CD4-positive, alpha-beta T cell (primary cell): ENCODE measurements at regions of chr9 and their contacts with region 1.

Region 1: DNA sequence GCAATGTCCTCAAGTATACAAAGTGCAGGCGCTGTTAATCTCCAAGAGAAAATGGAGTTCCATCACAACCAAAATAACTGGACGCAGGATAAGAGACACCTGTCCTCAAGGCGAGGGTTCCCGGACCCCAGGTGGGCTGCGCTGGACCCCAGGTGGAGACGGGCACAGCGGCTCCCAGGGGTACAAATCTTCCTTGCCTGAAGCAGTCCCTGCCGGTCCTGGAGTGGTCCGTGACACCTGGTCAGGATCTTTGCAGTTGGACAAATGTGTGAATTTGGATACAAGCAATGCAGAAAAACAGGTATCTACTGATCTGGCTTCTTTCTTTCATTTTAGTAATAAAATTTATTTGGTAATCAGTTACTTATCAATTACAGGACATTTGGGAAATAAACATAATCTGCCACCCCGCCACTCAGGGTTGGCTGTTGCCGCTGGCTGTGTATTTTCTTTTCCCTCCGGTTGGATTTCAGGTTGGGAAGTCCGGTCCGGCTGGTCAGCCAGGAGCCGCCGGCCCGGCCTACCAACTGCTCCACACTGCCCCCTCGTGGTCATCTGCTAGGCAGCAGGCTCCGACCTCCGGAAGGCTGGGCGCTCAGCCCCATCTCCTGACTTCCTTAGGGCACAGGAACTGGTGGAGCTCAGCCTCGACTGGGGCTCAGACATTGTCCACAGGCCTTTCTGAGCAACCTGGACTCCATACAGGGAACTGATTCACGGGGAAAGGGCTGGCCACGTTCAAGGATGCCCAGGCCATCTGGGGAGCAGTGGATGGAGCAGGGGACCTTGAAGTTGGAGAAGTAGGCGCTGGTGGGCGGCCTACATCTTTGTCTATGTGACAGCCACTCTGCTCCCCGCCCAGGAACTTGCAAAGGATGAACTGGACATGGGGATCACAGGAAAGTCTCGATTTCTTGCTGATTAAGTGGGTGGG is 43.4 kb downstream of the NXNL2 start:
- DNase-seq: peak; percentile 32 to 77 (median 54)
- ATAC-seq: no peak
- H3K4me3 ChIP-seq: no peak overlapping the region
- H3K4me3 Mint-ChIP-seq: no peak overlapping the region
- H3K27ac ChIP-seq: no peak overlapping the region
- H3K27ac Mint-ChIP-seq: no peak overlapping the region
- H3K4me1 ChIP-seq: peaks cover 9% of the 10 kb centered on the region
- H3K4me1 Mint-ChIP-seq: no peaks in the 10 kb centered on the region
- H3K27me3 ChIP-seq: peaks cover 0 to 4% of the 10 kb centered on the region in 2 experiments
- H3K27me3 Mint-ChIP-seq: peaks cover 11% of the 10 kb centered on the region
- CTCF ChIP-seq: peak; percentile 97

Region 2: GRCh38 chr9:87336914-87337333 is 1241.5 kb before region 1 on chr9:
- CTCF ChIA-PET with region 1: no interaction called
- POLR2A ChIA-PET with region 1: no interaction called
- intact Hi-C with region 1: loop called (anchors 5 kb)
- DNase-seq: peak in 4 of 14 experiments; percentile 2 to 56 (median 36)
- ATAC-seq: no peak
- H3K4me3 ChIP-seq: peak overlapping the region; percentile 29
- H3K4me3 Mint-ChIP-seq: peak overlapping the region; percentile 83
- H3K27ac ChIP-seq: no peak overlapping the region
- H3K27ac Mint-ChIP-seq: no peak overlapping the region
- H3K4me1 ChIP-seq: peaks cover 4% of the 10 kb centered on the region
- H3K4me1 Mint-ChIP-seq: peaks cover 11% of the 10 kb centered on the region
- H3K27me3 ChIP-seq: peaks cover 20 to 28% of the 10 kb centered on the region in 2 experiments
- H3K27me3 Mint-ChIP-seq: peaks cover 34% of the 10 kb centered on the region
- CTCF ChIP-seq: peak; percentile 72

Region 3: DNA sequence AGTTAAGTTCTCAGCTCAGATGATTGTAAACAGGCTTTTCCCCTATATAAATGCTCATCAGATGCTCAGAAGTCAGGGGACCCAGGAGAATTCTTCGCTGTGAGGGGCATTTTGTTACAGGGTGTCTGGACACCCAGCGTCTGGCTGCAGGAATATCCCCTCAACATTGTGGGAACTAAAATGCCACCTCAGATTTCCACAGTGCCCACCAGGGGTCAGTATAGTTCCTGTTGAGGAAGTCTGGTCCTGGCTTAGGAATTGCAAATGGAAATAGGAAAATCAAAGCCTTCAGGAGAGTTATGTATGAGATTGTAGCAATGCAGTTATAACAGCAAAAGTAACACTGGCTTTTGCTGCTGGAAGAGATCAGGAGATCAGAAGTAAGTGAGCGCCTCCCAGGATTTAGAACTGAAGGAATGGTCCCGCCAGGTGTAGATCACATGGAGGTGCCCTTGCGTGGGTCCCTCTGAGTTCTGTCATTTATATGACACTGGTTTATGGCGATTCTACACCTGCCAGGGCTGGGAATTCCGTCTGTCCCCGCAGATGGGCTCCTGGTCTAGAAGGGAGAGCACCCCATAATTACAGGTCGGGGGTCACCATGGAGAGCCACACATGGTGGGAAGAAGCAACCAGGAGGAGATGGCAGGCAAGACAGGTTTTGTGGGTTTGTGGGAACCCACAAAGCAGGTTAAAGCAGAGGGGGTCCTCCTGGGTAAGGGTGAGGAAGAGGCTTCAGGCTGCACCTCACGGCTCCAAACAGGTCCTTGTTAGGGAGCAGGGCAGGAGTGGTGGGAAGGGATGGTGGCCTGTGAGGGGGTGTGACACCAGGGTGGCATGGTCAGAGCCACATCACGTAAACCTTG is 899.5 kb before region 1 on chr9:
- CTCF ChIA-PET with region 1: no interaction called
- POLR2A ChIA-PET with region 1: no interaction called
- intact Hi-C with region 1: loop called (anchors 2 kb)
- DNase-seq: peak in 11 of 14 experiments; percentile 10 to 70 (median 37)
- ATAC-seq: no peak
- H3K4me3 ChIP-seq: no peak overlapping the region
- H3K4me3 Mint-ChIP-seq: no peak overlapping the region
- H3K27ac ChIP-seq: no peak overlapping the region
- H3K27ac Mint-ChIP-seq: no peak overlapping the region
- H3K4me1 ChIP-seq: peaks cover 7% of the 10 kb centered on the region
- H3K4me1 Mint-ChIP-seq: peaks cover 13% of the 10 kb centered on the region
- H3K27me3 ChIP-seq: no peaks in the 10 kb centered on the region
- H3K27me3 Mint-ChIP-seq: no peaks in the 10 kb centered on the region
- CTCF ChIP-seq: peak; percentile 88

Region 4: DNA sequence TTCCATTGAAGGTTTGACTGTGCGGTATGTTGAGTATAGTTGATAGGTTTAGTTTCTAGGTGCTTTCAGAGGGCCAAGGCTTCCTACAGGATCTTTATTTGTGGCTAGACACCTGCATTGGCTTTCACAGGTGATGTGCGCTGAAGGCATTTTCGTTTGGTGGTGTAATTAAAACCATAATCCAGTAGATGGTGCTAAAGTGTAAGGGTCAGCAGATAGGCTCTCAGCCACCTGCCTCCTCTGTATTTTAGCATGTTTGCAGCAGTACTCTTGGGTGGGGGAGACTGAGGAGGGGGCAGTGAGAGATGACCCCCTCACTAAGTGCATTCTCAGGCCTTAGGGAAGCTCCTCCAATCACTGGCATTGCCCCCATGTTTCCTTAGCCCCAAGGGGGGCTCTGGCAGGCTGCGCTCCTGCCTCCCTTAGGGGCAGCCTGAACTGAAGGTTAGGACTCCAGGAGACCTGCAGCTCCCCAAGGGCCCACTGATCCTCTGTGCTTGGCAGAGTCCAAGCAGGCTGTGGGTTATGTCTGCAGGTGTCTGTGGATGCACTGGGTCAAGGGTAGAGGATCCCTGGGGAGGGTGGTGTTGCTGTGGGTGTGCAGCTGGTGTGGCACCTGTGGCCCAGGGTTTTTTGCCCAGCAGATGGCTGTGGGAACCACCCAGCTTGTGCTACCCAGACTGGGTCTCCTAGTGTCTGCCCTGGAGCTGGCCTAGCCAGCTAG is 627.5 kb before region 1 on chr9:
- CTCF ChIA-PET with region 1: no interaction called
- POLR2A ChIA-PET with region 1: no interaction called
- intact Hi-C with region 1: loop called in 1 of 2 experiments (anchors 5 kb)
- DNase-seq: peak in 2 of 14 experiments; percentile 24 to 42
- ATAC-seq: peak; percentile 26
- H3K4me3 ChIP-seq: no peak overlapping the region
- H3K4me3 Mint-ChIP-seq: no peak overlapping the region
- H3K27ac ChIP-seq: no peak overlapping the region
- H3K27ac Mint-ChIP-seq: no peak overlapping the region
- H3K4me1 ChIP-seq: peaks cover 3% of the 10 kb centered on the region
- H3K4me1 Mint-ChIP-seq: peaks cover 6% of the 10 kb centered on the region
- H3K27me3 ChIP-seq: peaks cover 0 to 3% of the 10 kb centered on the region in 2 experiments
- H3K27me3 Mint-ChIP-seq: peaks cover 19% of the 10 kb centered on the region
- CTCF ChIP-seq: peak; percentile 25

Region 5: DNA sequence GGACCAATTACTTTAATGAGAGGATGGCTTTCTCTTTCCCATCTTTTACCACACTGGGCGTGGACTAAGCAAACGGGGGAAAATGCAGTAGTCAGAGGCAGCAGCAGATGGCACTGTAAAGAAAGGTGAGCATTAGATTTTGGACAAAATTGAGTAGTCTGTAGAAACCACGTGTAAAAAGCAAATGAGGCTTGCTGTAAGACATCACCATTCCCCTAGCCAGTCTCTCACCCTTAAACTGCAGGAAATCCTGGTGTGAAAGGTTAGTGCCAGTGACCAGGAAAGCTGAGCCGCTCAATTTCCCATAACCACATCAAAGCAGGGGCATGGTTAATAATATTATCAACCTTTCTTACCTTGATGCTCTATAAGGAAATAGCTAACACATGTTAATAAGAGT is 471.9 kb before region 1 on chr9:
- CTCF ChIA-PET with region 1: no interaction called
- POLR2A ChIA-PET with region 1: no interaction called
- intact Hi-C with region 1: loop called in 1 of 2 experiments (anchors 5 kb)
- DNase-seq: peak in 3 of 14 experiments; percentile 19 to 23 (median 22)
- ATAC-seq: no peak
- H3K4me3 ChIP-seq: no peak overlapping the region
- H3K4me3 Mint-ChIP-seq: no peak overlapping the region
- H3K27ac ChIP-seq: no peak overlapping the region
- H3K27ac Mint-ChIP-seq: no peak overlapping the region
- H3K4me1 ChIP-seq: no peaks in the 10 kb centered on the region
- H3K4me1 Mint-ChIP-seq: no peaks in the 10 kb centered on the region
- H3K27me3 ChIP-seq: peaks cover 0 to 5% of the 10 kb centered on the region in 2 experiments
- H3K27me3 Mint-ChIP-seq: peaks cover 38% of the 10 kb centered on the region
- CTCF ChIP-seq: no peak

Region 6: GRCh38 chr9:88173378-88173999 is 404.9 kb before region 1 on chr9:
- CTCF ChIA-PET with region 1: no interaction called
- POLR2A ChIA-PET with region 1: interaction called, 3 read pairs
- intact Hi-C with region 1: loop called (anchors 1 kb)
- DNase-seq: peak; percentile 5 to 76 (median 44)
- ATAC-seq: peak; percentile 48
- H3K4me3 ChIP-seq: no peak overlapping the region
- H3K4me3 Mint-ChIP-seq: no peak overlapping the region
- H3K27ac ChIP-seq: no peak overlapping the region
- H3K27ac Mint-ChIP-seq: no peak overlapping the region
- H3K4me1 ChIP-seq: no peaks in the 10 kb centered on the region
- H3K4me1 Mint-ChIP-seq: peaks cover 1% of the 10 kb centered on the region
- H3K27me3 ChIP-seq: no peaks in the 10 kb centered on the region
- H3K27me3 Mint-ChIP-seq: peaks cover 3% of the 10 kb centered on the region
- CTCF ChIP-seq: peak; percentile 91

Region 7: DNA sequence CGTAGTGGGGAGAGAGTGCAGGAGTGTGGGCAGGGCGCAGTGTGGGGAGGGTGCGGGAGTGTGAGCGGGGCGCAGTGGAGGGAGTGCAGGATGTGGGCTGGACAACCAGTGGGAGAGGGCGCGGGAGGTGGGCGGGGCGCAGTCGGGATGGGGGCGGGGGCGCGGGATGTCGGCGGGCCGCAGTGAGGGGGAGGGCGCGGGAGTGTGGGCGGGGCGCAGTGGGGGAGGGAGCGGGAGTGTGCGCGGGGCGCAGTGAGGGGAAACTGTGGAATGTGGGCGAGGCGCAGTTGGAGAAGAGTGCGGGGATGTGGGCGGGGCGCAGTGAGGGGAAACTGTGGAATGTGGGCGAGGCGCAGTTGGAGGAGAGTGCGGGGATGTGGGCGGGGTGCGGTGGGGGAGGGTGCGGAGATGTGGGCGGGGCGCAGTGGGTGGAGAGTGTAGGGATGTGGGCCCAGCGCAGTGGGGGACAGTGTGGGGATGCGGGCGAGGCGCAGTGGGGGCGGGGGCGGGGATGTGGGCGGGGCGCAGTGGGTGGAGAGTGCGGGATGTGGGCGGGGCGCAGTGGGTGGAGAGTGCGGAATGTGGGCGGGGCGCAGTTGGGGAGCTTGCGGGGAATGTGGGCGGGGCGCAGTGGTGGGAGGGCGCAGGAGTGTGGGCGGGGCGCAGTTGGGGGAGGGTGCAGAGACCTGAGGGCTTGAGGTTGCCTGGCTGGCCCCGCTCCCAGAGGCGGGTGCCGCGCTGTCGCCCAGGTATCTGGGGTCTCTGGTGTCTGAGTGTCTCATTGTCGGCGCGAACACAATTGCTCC is 43.7 kb before region 1 on chr9 and contains the start of gene NXNL2:
- CTCF ChIA-PET with region 1: no interaction called
- POLR2A ChIA-PET with region 1: no interaction called
- intact Hi-C with region 1: no loop called
- DNase-seq: peak; percentile 19 to 74 (median 42)
- ATAC-seq: peak; percentile 71
- H3K4me3 ChIP-seq: peak within 1 kb of the TSS; percentile 43
- H3K4me3 Mint-ChIP-seq: peak within 1 kb of the TSS; percentile 85
- H3K27ac ChIP-seq: no peak within 1 kb of the TSS
- H3K27ac Mint-ChIP-seq: no peak within 1 kb of the TSS
- H3K4me1 ChIP-seq: peaks cover 18% of the 10 kb centered on the region
- H3K4me1 Mint-ChIP-seq: peaks cover 25% of the 10 kb centered on the region
- H3K27me3 ChIP-seq: peaks cover 23 to 28% of the 10 kb centered on the region in 2 experiments
- H3K27me3 Mint-ChIP-seq: peaks cover 21% of the 10 kb centered on the region
- CTCF ChIP-seq: no peak
- total RNA-seq, gene NXNL2: not detected